ENCODE measurements at regions of chr3 and their contacts with region 1.

Region 1: GRCh38 chr3:49339945-49340800 is at the start of gene USP4:
- DNase-seq: peak; percentile 91 to 93 (median 91)
- H3K4me3 ChIP-seq: peak within 1 kb of the TSS; percentile 63 to 81
- H3K4me3 Mint-ChIP-seq: peak within 1 kb of the TSS; percentile 91 to 97 (median 94)
- H3K27ac ChIP-seq: peak within 1 kb of the TSS; percentile 92
- H3K27ac Mint-ChIP-seq: peak within 1 kb of the TSS; percentile 96 to 100 (median 98)
- H3K4me1 ChIP-seq: peaks cover 56% of the 10 kb centered on the region
- H3K4me1 Mint-ChIP-seq: peaks cover 27 to 51% (median 41%) of the 10 kb centered on the region in 4 donors
- H3K27me3 ChIP-seq: no peaks in the 10 kb centered on the region
- H3K27me3 Mint-ChIP-seq: no peaks in the 10 kb centered on the region
- total RNA-seq, gene USP4: 111 to 114 TPM

Region 2: GRCh38 chr3:49007068-49007770 is 333.0 kb before region 1 on chr3 and contains the start of gene WDR6:
- CTCF ChIA-PET with region 1: no interaction called
- POLR2A ChIA-PET with region 1: interaction called, 10 read pairs
- intact Hi-C with region 1: no loop called
- DNase-seq: peak; percentile 95 to 98 (median 97)
- H3K4me3 ChIP-seq: peak within 1 kb of the TSS; percentile 81 to 97
- H3K4me3 Mint-ChIP-seq: peak within 1 kb of the TSS; percentile 93 to 99 (median 98)
- H3K27ac ChIP-seq: peak within 1 kb of the TSS; percentile 87
- H3K27ac Mint-ChIP-seq: peak within 1 kb of the TSS; percentile 95 to 100 (median 99)
- H3K4me1 ChIP-seq: peaks cover 20% of the 10 kb centered on the region
- H3K4me1 Mint-ChIP-seq: peaks cover 15 to 37% (median 24%) of the 10 kb centered on the region in 4 donors
- H3K27me3 ChIP-seq: no peaks in the 10 kb centered on the region
- H3K27me3 Mint-ChIP-seq: no peaks in the 10 kb centered on the region
- total RNA-seq, gene WDR6: 287 to 295 TPM

Region 3: GRCh38 chr3:49295489-49296058 is 44.6 kb before region 1 on chr3:
- CTCF ChIA-PET with region 1: interaction called, 7 read pairs
- POLR2A ChIA-PET with region 1: interaction called, 4 read pairs
- intact Hi-C with region 1: loop called (anchors 1 kb)
- DNase-seq: peak in 4 of 5 donors; percentile 28 to 45 (median 37)
- H3K4me3 ChIP-seq: no peak overlapping the region
- H3K4me3 Mint-ChIP-seq: peak overlapping the region in 2 of 8 donors; percentile 4 to 71
- H3K27ac ChIP-seq: no peak overlapping the region
- H3K27ac Mint-ChIP-seq: peak overlapping the region in 4 of 7 donors; percentile 3 to 74 (median 32)
- H3K4me1 ChIP-seq: no peaks in the 10 kb centered on the region
- H3K4me1 Mint-ChIP-seq: peaks cover 0 to 6% (median 1%) of the 10 kb centered on the region in 4 donors
- H3K27me3 ChIP-seq: no peaks in the 10 kb centered on the region
- H3K27me3 Mint-ChIP-seq: no peaks in the 10 kb centered on the region

Region 4: GRCh38 chr3:49387721-49388120 is 47.5 kb after region 1 on chr3:
- CTCF ChIA-PET with region 1: interaction called, 7 read pairs
- POLR2A ChIA-PET with region 1: interaction called, 12 read pairs
- intact Hi-C with region 1: no loop called
- DNase-seq: no peak
- H3K4me3 ChIP-seq: no peak overlapping the region
- H3K4me3 Mint-ChIP-seq: peak overlapping the region in 3 of 8 donors; percentile 12 to 63 (median 26)
- H3K27ac ChIP-seq: no peak overlapping the region
- H3K27ac Mint-ChIP-seq: peak overlapping the region in 5 of 7 donors; percentile 37 to 77 (median 64)
- H3K4me1 ChIP-seq: peaks cover 84% of the 10 kb centered on the region
- H3K4me1 Mint-ChIP-seq: peaks cover 38 to 82% (median 57%) of the 10 kb centered on the region in 4 donors
- H3K27me3 ChIP-seq: no peaks in the 10 kb centered on the region
- H3K27me3 Mint-ChIP-seq: no peaks in the 10 kb centered on the region

Region 5: DNA sequence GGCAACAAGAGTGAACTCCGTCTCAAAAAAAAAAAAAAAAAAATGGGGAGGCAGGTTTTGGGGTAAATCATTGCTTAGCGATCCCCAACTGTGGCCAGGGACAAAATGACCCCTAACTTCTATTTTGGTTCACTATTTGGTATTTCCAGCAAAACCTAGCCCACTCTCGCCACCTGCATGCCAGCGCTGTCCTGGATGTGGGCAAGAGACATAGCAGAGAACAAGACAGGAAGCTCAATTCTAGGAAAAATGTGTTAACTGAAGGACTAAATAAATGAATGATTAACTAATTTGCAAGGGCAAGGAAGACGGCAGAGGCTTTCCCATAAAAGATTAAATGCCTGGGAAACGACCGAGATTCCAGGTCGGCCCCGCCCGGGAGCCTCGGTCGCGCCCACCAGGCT is 88.5 kb after region 1 on chr3:
- CTCF ChIA-PET with region 1: interaction called, 16 read pairs
- POLR2A ChIA-PET with region 1: interaction called, 43 read pairs
- intact Hi-C with region 1: loop called (anchors 1 kb)
- DNase-seq: no peak
- H3K4me3 ChIP-seq: peak overlapping the region; percentile 55 to 86
- H3K4me3 Mint-ChIP-seq: peak overlapping the region; percentile 90 to 97 (median 95)
- H3K27ac ChIP-seq: peak overlapping the region; percentile 63
- H3K27ac Mint-ChIP-seq: peak overlapping the region; percentile 85 to 97 (median 94)
- H3K4me1 ChIP-seq: peaks cover 22% of the 10 kb centered on the region
- H3K4me1 Mint-ChIP-seq: peaks cover 8 to 33% (median 22%) of the 10 kb centered on the region in 4 donors
- H3K27me3 ChIP-seq: no peaks in the 10 kb centered on the region
- H3K27me3 Mint-ChIP-seq: no peaks in the 10 kb centered on the region

Region 6: DNA sequence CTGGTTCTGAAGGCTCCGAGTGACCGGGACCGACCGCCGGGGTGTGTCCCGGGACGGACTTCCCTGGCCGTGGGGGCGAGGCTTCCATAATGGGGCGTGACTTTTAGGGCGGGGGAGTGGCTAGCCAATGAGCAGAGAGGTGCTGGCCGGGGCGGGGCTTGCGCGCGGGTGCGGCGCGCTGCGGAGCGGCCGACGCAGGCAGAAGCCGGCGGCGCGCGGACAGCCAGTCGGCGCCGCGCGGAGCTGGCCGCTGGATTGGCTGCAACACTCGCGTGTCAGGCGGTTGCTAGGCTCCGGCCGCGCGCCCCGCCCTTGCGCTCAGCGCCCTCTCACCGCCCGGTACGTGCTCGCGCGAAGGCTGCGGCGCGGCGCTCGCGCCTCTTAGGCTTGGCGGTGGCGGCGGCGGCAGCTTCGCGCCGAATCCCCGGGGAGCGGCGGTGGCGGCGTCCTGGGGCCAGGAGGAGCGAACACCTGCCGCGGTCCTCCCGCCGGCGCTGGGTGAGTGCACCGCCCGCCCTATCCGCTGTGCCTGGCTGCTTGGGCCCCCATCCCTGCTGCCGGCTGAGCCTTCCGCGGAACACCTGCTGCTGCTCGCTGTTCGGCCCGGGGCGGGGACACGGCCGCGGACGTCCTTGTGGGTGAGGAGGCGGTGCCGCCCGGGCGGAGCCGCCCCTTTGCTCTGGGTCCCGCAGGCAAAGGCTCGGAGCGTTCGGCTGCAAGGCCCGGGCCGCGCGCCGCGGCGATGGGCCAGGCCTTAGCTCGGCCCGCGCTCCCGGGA is 130.0 kb after region 1 on chr3 and contains the start of gene DAG1:
- CTCF ChIA-PET with region 1: interaction called, 14 read pairs
- POLR2A ChIA-PET with region 1: interaction called, 53 read pairs
- intact Hi-C with region 1: loop called (anchors 1 kb)
- DNase-seq: peak; percentile 93 to 96 (median 95)
- H3K4me3 ChIP-seq: peak within 1 kb of the TSS; percentile 71 to 89
- H3K4me3 Mint-ChIP-seq: peak within 1 kb of the TSS; percentile 89 to 93 (median 91)
- H3K27ac ChIP-seq: peak within 1 kb of the TSS; percentile 87
- H3K27ac Mint-ChIP-seq: peak within 1 kb of the TSS; percentile 90 to 96 (median 95)
- H3K4me1 ChIP-seq: peaks cover 26% of the 10 kb centered on the region
- H3K4me1 Mint-ChIP-seq: peaks cover 15 to 28% (median 19%) of the 10 kb centered on the region in 4 donors
- H3K27me3 ChIP-seq: no peaks in the 10 kb centered on the region
- H3K27me3 Mint-ChIP-seq: no peaks in the 10 kb centered on the region
- total RNA-seq, gene DAG1: 15.3 to 18.0 TPM

Measured in CD4-positive, alpha-beta memory T cell (primary cell).